PC-9 (cell line): ENCODE measurements at regions of chr1 and their contacts with region 1.

Region 1: GRCh38 chr1:207052911-207053769 is at the start of gene PFKFB2:
- DNase-seq: peak; percentile 98 to 99
- H3K4me3 ChIP-seq: peak within 1 kb of the TSS; percentile 93
- H3K27ac ChIP-seq: peak within 1 kb of the TSS; percentile 92
- H3K4me1 ChIP-seq: peaks cover 26% of the 10 kb centered on the region
- H3K27me3 ChIP-seq: no peaks in the 10 kb centered on the region
- CTCF ChIP-seq: no peak; the same call in 1 of the 2 replicates
- total RNA-seq, gene PFKFB2: 16.3 and 28.0 TPM in 2 replicates

Region 2: DNA sequence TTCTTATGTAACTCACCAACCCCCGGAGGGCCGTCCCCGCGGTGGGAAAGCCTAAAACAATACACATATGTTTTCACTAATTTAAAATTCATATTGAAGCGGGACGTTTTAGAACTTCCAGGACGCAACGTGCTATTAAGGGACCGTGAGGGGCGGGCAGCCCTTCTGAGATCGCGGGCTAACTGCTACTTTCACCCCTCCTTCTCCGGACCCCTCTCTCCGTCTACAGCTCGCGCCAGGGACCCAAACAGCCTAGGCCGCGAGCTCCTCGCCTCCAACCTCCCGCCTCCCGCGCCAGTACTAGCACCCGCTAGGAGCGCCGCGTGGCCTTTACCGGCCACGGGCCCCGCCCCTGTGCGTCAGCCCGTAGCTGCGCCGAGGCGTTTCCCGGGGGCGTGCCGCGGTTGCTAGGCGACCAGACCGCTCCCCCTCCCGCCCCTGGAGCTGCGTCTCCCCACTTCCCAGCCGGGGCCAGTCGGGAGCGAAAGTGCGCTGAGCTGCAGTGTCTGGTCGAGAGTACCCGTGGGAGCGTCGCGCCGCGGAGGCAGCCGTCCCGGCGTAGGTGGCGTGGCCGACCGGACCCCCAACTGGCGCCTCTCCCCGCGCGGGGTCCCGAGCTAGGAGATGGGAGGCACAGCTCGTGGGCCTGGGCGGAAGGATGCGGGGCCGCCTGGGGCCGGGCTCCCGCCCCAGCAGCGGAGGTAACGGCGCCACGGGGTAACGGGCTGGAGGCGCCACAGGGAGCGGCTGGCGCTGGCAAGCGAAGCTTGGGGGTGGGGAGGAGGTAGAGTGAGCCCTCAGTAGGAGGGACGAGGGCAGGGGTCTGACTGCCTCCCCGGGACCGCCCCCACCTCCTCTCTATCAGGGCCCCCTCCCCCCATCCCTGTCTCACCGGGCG is 417.8 kb before region 1 on chr1 and contains the start of gene DYRK3:
- CTCF ChIA-PET with region 1: interaction called, 4 read pairs
- POLR2A ChIA-PET with region 1: no interaction called
- intact Hi-C with region 1: loop called (anchors 10 kb)
- DNase-seq: peak; percentile 64 to 95
- H3K4me3 ChIP-seq: peak within 1 kb of the TSS; percentile 80
- H3K27ac ChIP-seq: no peak within 1 kb of the TSS
- H3K4me1 ChIP-seq: peaks cover 10% of the 10 kb centered on the region
- H3K27me3 ChIP-seq: no peaks in the 10 kb centered on the region
- CTCF ChIP-seq: no peak
- total RNA-seq, gene DYRK3: 3.3 and 3.9 TPM in 2 replicates

Region 3: DNA sequence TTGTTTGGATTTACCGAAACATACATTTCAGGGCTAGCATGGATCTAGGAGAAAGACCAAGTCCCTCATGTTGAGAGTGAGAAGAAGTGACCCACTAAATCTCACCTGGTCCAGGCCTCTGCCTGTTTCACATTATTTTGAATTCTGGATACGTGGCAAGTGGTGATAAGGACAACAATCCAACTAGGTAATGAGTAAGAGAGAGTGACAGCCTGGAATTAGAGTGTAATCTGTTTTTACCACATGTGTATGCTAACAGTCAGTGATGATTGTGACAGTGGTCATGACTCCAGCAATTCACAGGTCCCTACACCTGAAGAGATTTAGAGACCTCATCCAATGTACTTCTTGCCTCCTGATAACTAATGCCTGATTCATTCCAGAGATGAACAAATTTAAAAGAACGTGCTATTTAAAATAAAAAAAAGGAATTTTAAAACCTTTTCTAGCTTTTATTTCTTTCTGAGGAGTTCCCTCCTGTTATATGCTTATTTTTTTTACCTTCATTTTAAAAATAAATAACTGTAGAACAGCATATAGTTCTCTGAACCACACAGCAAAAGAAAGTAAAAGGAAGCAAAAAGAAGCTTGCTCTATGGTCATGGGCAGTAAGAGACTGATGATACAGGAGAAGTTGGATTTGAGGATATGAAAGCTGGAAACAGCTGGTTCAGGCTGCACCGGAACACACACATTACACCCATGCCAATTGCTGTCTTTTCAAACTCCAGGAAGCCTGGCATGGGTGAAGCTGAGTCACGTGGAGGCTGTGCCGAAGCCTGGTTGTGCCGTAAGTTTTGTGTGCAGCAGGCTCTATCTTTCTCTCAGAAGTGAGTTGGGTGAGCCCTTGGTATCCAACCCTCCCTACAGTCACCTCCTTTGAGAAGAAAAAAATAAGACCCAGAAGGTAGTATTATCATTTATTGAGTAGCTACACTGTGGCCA is 35.3 kb before region 1 on chr1:
- CTCF ChIA-PET with region 1: interaction called, 4 read pairs
- POLR2A ChIA-PET with region 1: interaction called, 11 read pairs
- intact Hi-C with region 1: no loop called
- DNase-seq: no peak
- H3K4me3 ChIP-seq: no peak overlapping the region
- H3K27ac ChIP-seq: no peak overlapping the region
- H3K4me1 ChIP-seq: peaks cover 35% of the 10 kb centered on the region
- H3K27me3 ChIP-seq: no peaks in the 10 kb centered on the region
- CTCF ChIP-seq: no peak

Region 4: GRCh38 chr1:207032528-207033017 is 20.6 kb before region 1 on chr1 and contains the start of gene C1orf116:
- CTCF ChIA-PET with region 1: interaction called, 6 read pairs
- POLR2A ChIA-PET with region 1: interaction called, 51 read pairs
- intact Hi-C with region 1: loop called (anchors 1 kb)
- DNase-seq: peak; percentile 88 to 90
- H3K4me3 ChIP-seq: peak within 1 kb of the TSS; percentile 50
- H3K27ac ChIP-seq: peak within 1 kb of the TSS; percentile 83
- H3K4me1 ChIP-seq: peaks cover 80% of the 10 kb centered on the region
- H3K27me3 ChIP-seq: no peaks in the 10 kb centered on the region
- CTCF ChIP-seq: no peak
- total RNA-seq, gene C1orf116: 30.2 and 36.7 TPM in 2 replicates

Region 5: GRCh38 chr1:207259391-207259790 is 206.3 kb after region 1 on chr1:
- CTCF ChIA-PET with region 1: no interaction called
- POLR2A ChIA-PET with region 1: interaction called, 15 read pairs
- intact Hi-C with region 1: no loop called
- DNase-seq: no peak
- H3K4me3 ChIP-seq: no peak overlapping the region
- H3K27ac ChIP-seq: no peak overlapping the region
- H3K4me1 ChIP-seq: no peaks in the 10 kb centered on the region
- H3K27me3 ChIP-seq: no peaks in the 10 kb centered on the region
- CTCF ChIP-seq: peak; percentile 53; the same call in 1 of the 2 replicates